GM13977 (cell line): ENCODE measurements at regions of chr7 and their contacts with region 1.

Region 1: DNA sequence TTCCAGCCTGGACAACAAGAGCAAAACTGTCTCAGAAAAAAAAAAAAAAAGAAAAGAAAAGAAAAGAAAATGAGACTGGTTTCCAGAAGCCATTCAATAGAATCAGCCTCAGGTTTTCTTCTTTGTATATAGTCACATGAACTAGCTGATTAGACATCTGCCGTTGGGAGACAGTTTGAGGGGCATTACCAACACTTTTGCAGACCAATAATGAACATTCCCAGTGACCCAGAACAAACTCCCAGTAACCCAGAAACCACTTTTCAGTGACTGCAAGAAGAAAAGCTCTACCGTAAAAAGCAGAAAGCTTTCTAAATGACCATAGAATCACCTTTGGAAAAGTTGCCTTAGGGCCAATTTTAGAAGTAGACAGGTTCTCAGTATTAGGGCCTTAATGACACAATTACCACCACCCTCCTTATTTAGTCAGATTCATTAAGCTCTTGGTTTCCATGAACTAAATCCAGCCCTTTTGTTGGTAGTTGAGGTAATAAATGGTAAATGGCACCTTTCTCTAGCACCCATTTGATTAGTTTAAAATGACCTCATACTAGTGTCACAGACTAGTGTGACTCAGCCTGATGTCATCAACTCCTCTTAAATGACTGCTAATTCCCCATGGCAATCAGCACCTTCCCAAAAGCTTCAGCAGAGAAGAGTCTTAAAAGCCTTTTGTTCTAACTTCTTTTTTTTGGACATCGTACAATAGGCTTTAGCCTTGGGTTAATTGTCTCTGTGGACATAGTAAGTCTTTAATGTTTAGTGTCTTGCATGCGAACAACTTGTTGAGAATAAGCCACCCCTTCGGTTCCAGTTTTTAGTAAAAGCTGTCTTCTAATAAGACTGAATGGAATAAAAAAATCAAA is 33.6 kb upstream of the XRCC2 start:
- DNase-seq: no peak
- CTCF ChIP-seq: no peak

Region 2: GRCh38 chr7:152336754-152337368 is 372.7 kb before region 1 on chr7:
- in situ Hi-C with region 1: loop called (anchors 25 kb)
- DNase-seq: peak; percentile 24
- CTCF ChIP-seq: peak; percentile 64

Region 3: GRCh38 chr7:152956006-152956405 is 246.5 kb after region 1 on chr7:
- in situ Hi-C with region 1: no loop called
- DNase-seq: no peak
- CTCF ChIP-seq: no peak